Motor neuron (in vitro differentiated cells): ENCODE measurements at regions of chr11 and their contacts with region 1.

Region 1: GRCh38 chr11:126062679-126063506 is at the start of gene CDON:
- ATAC-seq: peak; percentile 90 to 95 (median 92)
- H3K4me3 ChIP-seq: peak within 1 kb of the TSS; percentile 57 to 85 (median 71)
- H3K27ac ChIP-seq: peak within 1 kb of the TSS; percentile 96
- H3K4me1 ChIP-seq: peaks cover 17 to 26% of the 10 kb centered on the region in 2 donors
- total RNA-seq, gene CDON: 1.3 to 16.9 (median 10.3) TPM

Region 2: DNA sequence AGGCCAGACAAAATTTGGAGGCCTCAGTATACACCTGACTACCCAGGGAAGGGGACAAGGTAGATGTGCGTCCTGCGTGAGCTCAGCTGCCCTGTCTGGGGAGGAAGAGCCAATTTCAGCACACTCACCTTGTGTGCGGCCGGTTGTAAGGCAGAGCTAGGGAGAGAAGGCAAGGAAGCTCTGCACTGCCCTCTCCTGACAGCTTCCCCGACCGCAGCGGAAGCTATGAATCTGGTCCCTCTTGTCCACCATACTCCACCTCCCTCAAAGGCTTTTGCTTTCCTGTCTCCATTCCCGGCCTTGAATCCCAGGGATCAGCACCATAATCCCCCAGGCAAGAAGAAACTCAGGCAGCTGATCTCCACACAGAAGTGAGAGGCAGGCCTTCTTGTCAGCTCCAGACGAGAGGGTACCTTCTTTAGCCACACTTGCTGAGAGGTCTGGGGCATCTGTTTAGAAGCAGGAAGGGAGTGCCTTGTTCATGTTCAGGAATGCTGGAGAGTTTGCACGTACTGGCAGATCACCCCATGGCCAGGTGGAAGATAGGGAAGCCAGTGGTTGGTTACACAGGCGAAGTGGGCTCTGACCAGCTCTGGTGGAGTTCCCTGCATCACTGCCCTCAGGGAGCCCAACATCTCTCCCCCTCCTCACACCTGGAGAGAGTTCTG is 629.3 kb before region 1 on chr11:
- in situ Hi-C with region 1: no loop called
- ATAC-seq: peak; percentile 82 to 98 (median 88)
- H3K4me3 ChIP-seq: no peak overlapping the region
- H3K27ac ChIP-seq: no peak overlapping the region
- H3K4me1 ChIP-seq: peaks cover 0 to 3% of the 10 kb centered on the region in 2 donors

Region 3: GRCh38 chr11:125874556-125875124 is 188.3 kb before region 1 on chr11:
- in situ Hi-C with region 1: no loop called
- ATAC-seq: peak; percentile 93 to 100 (median 100)
- H3K4me3 ChIP-seq: no peak overlapping the region
- H3K27ac ChIP-seq: no peak overlapping the region
- H3K4me1 ChIP-seq: no peaks in the 10 kb centered on the region

Region 4: GRCh38 chr11:125941619-125942611 is 121.0 kb before region 1 on chr11:
- in situ Hi-C with region 1: loop called in 1 of 9 experiments (anchors 25 kb)
- ATAC-seq: peak; percentile 30 to 88 (median 64)
- H3K4me3 ChIP-seq: no peak overlapping the region
- H3K27ac ChIP-seq: no peak overlapping the region
- H3K4me1 ChIP-seq: peaks cover 0 to 9% of the 10 kb centered on the region in 2 donors

Region 5: GRCh38 chr11:126544108-126545056 is 481.5 kb after region 1 on chr11:
- in situ Hi-C with region 1: no loop called
- ATAC-seq: peak; percentile 10 to 77 (median 72)
- H3K4me3 ChIP-seq: no peak overlapping the region
- H3K27ac ChIP-seq: no peak overlapping the region
- H3K4me1 ChIP-seq: peaks cover 36 to 37% of the 10 kb centered on the region in 2 donors